ENCODE measurements at regions of chr11 and their contacts with region 1.

Region 1: DNA sequence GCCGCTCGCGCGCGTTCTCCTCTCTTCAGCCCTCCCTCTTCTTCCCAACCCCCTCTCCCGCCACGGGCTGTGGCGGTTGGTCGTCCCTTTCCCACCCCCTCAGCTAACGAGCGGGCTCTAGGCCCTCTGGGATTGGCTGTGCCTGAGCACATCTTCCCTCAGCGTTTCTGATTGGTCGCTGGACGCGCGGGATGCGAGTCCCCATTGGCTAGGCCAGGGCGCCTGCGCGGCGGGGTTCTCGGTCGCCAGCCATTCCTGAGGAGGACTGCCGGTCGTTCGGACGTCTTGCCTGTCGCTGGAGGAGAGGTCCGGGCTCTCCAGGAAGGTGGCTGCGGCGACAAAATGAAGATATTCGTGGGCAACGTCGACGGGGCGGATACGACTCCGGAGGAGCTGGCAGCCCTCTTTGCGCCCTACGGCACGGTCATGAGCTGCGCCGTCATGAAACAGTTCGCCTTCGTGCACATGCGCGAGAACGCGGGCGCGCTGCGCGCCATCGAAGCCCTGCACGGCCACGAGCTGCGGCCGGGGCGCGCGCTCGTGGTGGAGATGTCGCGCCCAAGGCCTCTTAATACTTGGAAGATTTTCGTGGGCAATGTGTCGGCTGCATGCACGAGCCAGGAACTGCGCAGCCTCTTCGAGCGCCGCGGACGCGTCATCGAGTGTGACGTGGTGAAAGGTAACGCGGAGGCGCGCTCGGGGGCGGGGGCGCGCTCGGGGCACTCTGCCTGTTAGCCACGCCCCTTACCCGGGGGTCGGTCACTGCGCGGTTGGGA is at the start of gene RBM14:
- DNase-seq: peak; percentile 97
- ATAC-seq: peak; percentile 88
- H3K4me3 Mint-ChIP-seq: peak within 1 kb of the TSS; percentile 98
- H3K27ac Mint-ChIP-seq: peak within 1 kb of the TSS; percentile 99
- H3K4me1 Mint-ChIP-seq: peaks cover 63% of the 10 kb centered on the region
- H3K27me3 Mint-ChIP-seq: no peaks in the 10 kb centered on the region
- CTCF ChIP-seq: no peak
- total RNA-seq, gene RBM14: 147 and 160 TPM in 2 replicates

Region 2: GRCh38 chr11:66545701-66546367 is 70.7 kb before region 1 on chr11 and contains the start of gene ZDHHC24:
- CTCF ChIA-PET with region 1: no interaction called
- POLR2A ChIA-PET with region 1: interaction called, 13 read pairs
- intact Hi-C with region 1: loop called (anchors 5 kb)
- DNase-seq: peak; percentile 86
- ATAC-seq: peak; percentile 85
- H3K4me3 Mint-ChIP-seq: peak within 1 kb of the TSS; percentile 77
- H3K27ac Mint-ChIP-seq: peak within 1 kb of the TSS; percentile 57
- H3K4me1 Mint-ChIP-seq: peaks cover 35% of the 10 kb centered on the region
- H3K27me3 Mint-ChIP-seq: no peaks in the 10 kb centered on the region
- CTCF ChIP-seq: no peak
- total RNA-seq, gene ZDHHC24: 14.6 and 19.0 TPM in 2 replicates

Region 3: DNA sequence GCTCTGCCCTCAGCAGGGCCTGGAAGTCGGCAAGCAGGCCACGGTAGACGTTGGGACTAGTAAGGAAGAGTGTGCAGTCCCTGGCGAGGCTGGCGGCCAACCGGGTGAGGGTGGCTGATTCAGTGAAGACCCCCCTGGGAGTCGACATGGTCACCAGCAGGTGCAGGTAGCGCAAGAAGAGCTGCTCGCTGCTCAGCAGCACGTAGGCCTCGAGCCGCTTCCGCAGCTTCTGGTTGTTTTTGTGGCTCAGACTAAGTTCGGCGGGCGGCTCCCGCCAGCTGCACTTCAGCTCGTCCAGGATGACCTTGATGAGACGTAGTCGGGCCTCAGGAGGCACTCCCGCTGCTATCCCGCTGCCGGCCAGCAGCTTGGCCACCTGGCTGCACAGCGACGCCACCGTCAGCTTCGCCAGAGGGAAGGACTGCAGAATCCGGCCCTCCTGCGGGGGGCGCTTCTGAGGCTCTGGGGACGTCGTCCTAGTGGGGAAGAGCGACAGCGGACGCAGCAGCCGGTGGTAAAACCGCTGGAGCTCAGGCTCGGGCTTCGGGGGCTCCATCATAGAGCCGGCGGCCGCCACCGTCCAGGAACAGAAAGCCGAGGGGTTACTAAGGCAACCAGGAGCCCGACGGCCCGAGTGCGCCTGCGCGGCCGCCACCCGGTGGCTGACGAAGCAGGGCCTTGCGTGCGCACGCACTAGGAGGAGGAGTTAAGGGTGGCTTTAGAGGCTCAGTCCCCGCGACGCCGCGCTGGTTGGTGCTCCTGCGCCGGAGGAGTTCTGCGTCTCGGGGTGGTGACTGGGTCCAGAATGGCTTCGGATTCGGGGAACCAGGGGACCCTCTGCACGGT is 23.9 kb before region 1 on chr11 and contains the starts of genes CCDC87 and CCS:
- CTCF ChIA-PET with region 1: interaction called, 5 read pairs
- POLR2A ChIA-PET with region 1: interaction called, 72 read pairs
- intact Hi-C with region 1: loop called (anchors 1 kb)
- DNase-seq: peak; percentile 98
- ATAC-seq: peak; percentile 97
- H3K4me3 Mint-ChIP-seq: peak within 1 kb of the TSS; percentile 100
- H3K27ac Mint-ChIP-seq: peak within 1 kb of the TSS; percentile 99
- H3K4me1 Mint-ChIP-seq: peaks cover 36% of the 10 kb centered on the region
- H3K27me3 Mint-ChIP-seq: no peaks in the 10 kb centered on the region
- CTCF ChIP-seq: no peak
- total RNA-seq, gene CCDC87: 0.22 and 0.31 TPM in 2 replicates
- total RNA-seq, gene CCS: 59.0 and 65.3 TPM in 2 replicates

Region 4: DNA sequence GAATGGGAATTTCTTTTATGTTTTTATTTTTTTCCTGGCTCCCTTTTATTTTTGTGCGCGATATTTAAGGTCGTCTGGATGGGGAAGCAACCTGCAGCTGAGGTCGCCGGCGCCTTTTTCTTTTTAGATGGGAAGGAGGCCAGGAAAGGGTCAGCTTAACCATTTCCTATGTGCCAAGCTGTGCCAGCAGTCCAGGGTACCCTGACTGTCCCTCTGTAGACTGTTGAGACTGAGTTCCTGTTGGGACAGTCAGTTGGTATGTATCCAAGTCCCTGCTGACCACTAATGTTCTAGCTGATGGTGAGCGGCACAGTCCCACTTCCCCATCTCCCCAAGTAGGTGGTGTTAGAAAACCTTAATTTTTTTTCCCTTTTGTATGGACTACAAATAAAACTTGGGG is 10.4 kb after region 1 on chr11:
- CTCF ChIA-PET with region 1: no interaction called
- POLR2A ChIA-PET with region 1: interaction called, 26 read pairs
- intact Hi-C with region 1: loop called (anchors 1 kb)
- DNase-seq: no peak
- ATAC-seq: no peak
- H3K4me3 Mint-ChIP-seq: no peak overlapping the region
- H3K27ac Mint-ChIP-seq: no peak overlapping the region
- H3K4me1 Mint-ChIP-seq: peaks cover 43% of the 10 kb centered on the region
- H3K27me3 Mint-ChIP-seq: no peaks in the 10 kb centered on the region
- CTCF ChIP-seq: no peak

Region 5: DNA sequence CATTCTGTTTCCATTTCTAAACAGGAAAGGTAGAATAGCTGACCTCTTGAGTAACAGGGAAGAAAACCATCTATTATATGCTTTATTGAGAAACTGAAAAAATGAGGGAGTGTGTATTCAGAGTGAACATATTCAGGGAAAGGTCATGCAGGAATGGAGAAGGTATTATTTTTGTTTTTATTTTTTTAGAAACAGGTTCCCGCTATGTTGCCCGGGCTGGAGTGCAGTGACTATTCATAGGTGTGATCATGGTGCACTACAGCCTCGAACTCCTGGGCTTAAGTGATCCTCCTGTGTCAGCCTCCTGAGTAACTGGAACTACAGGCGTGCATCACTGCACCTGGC is 217.9 kb after region 1 on chr11:
- CTCF ChIA-PET with region 1: no interaction called
- POLR2A ChIA-PET with region 1: no interaction called
- intact Hi-C with region 1: no loop called
- DNase-seq: no peak
- ATAC-seq: no peak
- H3K4me3 Mint-ChIP-seq: no peak overlapping the region
- H3K27ac Mint-ChIP-seq: peak overlapping the region; percentile 78
- H3K4me1 Mint-ChIP-seq: peaks cover 18% of the 10 kb centered on the region
- H3K27me3 Mint-ChIP-seq: no peaks in the 10 kb centered on the region
- CTCF ChIP-seq: no peak

Region 6: GRCh38 chr11:67118801-67119584 is 502.4 kb after region 1 on chr11 and contains the start of gene KDM2A:
- CTCF ChIA-PET with region 1: no interaction called
- POLR2A ChIA-PET with region 1: no interaction called
- intact Hi-C with region 1: loop called (anchors 10 kb)
- DNase-seq: peak; percentile 93
- ATAC-seq: peak; percentile 76
- H3K4me3 Mint-ChIP-seq: peak within 1 kb of the TSS; percentile 91
- H3K27ac Mint-ChIP-seq: peak within 1 kb of the TSS; percentile 91
- H3K4me1 Mint-ChIP-seq: peaks cover 36% of the 10 kb centered on the region
- H3K27me3 Mint-ChIP-seq: no peaks in the 10 kb centered on the region
- CTCF ChIP-seq: no peak
- total RNA-seq, gene KDM2A: 141 and 160 TPM in 2 replicates